OCI-LY7 (cell line): ENCODE measurements at regions of chr3 and their contacts with region 1.

Region 1: GRCh38 chr3:187738331-187739093 is 6.8 kb downstream of the BCL6 start:
- DNase-seq: peak; percentile 76
- H3K4me3 ChIP-seq: peak overlapping the region; percentile 86
- H3K27ac ChIP-seq: peak overlapping the region; percentile 90
- H3K4me1 ChIP-seq: peaks cover 60% of the 10 kb centered on the region
- CTCF ChIP-seq: peak; percentile 86

Region 2: DNA sequence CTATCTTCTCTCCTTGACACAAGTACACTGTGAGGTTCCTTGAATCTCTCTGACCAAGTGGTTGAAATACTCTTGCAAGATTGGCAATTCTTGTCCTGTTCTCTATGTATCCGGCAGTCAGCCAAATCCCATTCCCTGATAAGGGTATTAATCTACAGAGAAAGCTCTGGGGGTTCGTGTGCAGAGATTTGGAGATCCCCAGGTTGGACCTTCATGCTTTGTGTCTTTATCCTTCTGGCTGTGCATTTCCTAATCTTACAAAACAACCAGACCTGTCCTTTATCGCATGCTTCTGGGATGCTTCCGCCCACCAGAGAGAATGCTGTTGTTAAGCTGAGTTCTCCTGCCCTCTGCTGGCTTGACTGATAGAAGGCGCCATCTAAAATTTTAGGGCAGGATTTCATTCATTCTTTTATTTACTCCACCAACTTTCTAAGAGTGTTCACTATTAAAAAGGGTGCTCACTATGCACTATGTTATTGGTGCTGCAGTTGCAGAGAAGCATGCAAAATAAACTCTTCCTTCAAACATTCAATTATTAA is 59.7 kb before region 1 on chr3:
- CTCF ChIA-PET with region 1: no interaction called
- POLR2A ChIA-PET with region 1: no interaction called
- intact Hi-C with region 1: no loop called
- DNase-seq: peak; percentile 65
- H3K4me3 ChIP-seq: no peak overlapping the region
- H3K27ac ChIP-seq: no peak overlapping the region
- H3K4me1 ChIP-seq: no peaks in the 10 kb centered on the region
- CTCF ChIP-seq: peak; percentile 82

Region 3: GRCh38 chr3:188214442-188214841 is 475.9 kb after region 1 on chr3:
- CTCF ChIA-PET with region 1: interaction called, 3 read pairs
- POLR2A ChIA-PET with region 1: interaction called, 5 read pairs
- intact Hi-C with region 1: loop called (anchors 1 kb)
- DNase-seq: peak; percentile 82
- H3K4me3 ChIP-seq: peak overlapping the region; percentile 47
- H3K27ac ChIP-seq: peak overlapping the region; percentile 98
- H3K4me1 ChIP-seq: peaks cover 80% of the 10 kb centered on the region
- CTCF ChIP-seq: no peak

Region 4: GRCh38 chr3:188400494-188401243 is 662.2 kb after region 1 on chr3:
- CTCF ChIA-PET with region 1: interaction called, 3 read pairs
- POLR2A ChIA-PET with region 1: no interaction called
- intact Hi-C with region 1: loop called (anchors 5 kb)
- DNase-seq: peak; percentile 78
- H3K4me3 ChIP-seq: no peak overlapping the region
- H3K27ac ChIP-seq: peak overlapping the region; percentile 48
- H3K4me1 ChIP-seq: peaks cover 46% of the 10 kb centered on the region
- CTCF ChIP-seq: no peak

Region 5: DNA sequence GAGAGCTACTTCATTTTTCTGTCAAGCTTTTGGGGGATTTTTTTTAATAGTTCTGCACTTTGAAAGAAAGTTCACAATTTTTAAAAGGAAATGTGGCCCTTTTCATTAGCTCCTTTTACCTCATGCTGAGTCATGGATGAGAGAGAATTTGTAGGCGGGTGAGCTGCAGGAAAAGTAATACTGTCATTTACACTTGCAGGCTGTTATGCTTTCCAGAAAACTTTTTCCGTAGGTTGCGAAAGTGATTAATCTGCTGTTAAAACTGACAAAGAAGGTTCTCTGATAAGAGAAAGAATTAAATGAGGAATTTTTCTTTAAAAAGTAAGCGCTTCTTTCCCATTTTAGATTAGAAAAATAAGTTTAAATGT is 845.6 kb after region 1 on chr3:
- CTCF ChIA-PET with region 1: no interaction called
- POLR2A ChIA-PET with region 1: no interaction called
- intact Hi-C with region 1: loop called (anchors 5 kb)
- DNase-seq: peak; percentile 14
- H3K4me3 ChIP-seq: peak overlapping the region; percentile 9
- H3K27ac ChIP-seq: no peak overlapping the region
- H3K4me1 ChIP-seq: peaks cover 81% of the 10 kb centered on the region
- CTCF ChIP-seq: no peak

Region 6: DNA sequence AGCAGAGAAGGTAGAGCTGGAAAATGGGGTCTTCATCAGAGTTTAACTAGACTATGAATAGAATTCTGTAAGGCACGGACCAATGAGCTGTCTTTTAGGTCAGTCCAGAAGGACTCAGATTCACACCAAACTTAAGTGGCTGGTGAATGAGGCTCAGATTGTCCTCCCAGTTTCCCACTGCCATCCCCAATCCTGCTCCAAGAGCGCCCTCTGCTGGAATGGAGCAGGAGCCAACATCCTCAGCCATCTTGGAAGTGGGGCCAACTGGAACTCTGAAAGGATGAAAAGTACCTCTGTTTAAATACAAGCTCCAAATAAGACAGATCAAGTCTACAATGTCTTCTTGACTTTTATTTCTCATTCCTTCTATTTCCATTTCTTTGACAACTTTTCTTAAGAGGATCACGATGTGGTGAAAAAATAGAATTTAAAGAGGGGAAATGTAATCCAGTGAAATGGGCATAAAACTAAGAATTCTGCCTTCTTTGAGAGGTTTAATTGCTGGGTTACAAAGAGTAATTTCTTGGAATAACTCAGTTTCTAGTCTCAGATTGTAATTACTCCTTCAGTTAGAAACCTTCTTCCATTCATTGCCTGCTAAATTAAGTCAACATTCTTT is 1216.2 kb after region 1 on chr3:
- CTCF ChIA-PET with region 1: interaction called, 10 read pairs
- POLR2A ChIA-PET with region 1: interaction called, 4 read pairs
- intact Hi-C with region 1: loop called (anchors 1 kb)
- DNase-seq: peak; percentile 84
- H3K4me3 ChIP-seq: no peak overlapping the region
- H3K27ac ChIP-seq: no peak overlapping the region
- H3K4me1 ChIP-seq: peaks cover 12% of the 10 kb centered on the region
- CTCF ChIP-seq: peak; percentile 99